Sciatic nerve (tissue), 2 donors: ENCODE measurements at regions of chr6 and their contacts with region 1.

Region 1: DNA sequence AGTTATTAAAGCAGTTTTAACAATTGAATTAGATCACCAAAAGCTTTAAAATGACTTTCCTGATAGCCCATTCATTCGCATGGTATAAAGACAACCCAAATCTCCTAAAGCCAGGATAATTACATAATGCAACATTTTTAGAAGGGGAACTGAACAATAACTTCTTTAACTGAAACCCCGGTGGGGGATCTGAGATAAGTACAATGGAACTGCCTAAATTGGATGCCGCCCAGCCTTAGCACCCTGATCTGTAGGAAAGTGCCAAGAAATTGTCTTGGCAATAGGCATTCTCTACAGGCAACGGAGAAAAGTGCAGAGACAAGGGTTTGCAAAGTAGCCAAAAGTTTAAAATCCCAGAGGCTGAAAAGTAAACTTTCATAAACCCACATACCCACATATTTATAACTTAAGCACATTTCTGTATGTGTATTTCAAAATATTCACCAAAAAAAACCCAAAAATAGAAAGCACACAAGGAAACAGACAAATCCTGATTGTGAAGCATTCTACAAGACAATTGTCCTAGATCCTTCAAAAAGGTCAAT is 98.8 kb upstream of the BEND6 start:
- DNase-seq: no peak
- ATAC-seq: no peak

Region 2: GRCh38 chr6:55974688-55975087 is 881.4 kb before region 1 on chr6:
- intact Hi-C with region 1: loop called (anchors 5 kb)
- DNase-seq: no peak
- ATAC-seq: no peak